ENCODE measurements at regions of chr20 and their contacts with region 1.

Region 1: GRCh38 chr20:31605031-31605901 is at the start of gene ID1:
- DNase-seq: peak; percentile 88

Region 2: GRCh38 chr20:31560094-31560899 is 45.0 kb before region 1 on chr20:
- CTCF ChIA-PET with region 1: interaction called, 119 read pairs
- POLR2A ChIA-PET with region 1: interaction called, 260 read pairs
- DNase-seq: peak; percentile 70

Region 3: DNA sequence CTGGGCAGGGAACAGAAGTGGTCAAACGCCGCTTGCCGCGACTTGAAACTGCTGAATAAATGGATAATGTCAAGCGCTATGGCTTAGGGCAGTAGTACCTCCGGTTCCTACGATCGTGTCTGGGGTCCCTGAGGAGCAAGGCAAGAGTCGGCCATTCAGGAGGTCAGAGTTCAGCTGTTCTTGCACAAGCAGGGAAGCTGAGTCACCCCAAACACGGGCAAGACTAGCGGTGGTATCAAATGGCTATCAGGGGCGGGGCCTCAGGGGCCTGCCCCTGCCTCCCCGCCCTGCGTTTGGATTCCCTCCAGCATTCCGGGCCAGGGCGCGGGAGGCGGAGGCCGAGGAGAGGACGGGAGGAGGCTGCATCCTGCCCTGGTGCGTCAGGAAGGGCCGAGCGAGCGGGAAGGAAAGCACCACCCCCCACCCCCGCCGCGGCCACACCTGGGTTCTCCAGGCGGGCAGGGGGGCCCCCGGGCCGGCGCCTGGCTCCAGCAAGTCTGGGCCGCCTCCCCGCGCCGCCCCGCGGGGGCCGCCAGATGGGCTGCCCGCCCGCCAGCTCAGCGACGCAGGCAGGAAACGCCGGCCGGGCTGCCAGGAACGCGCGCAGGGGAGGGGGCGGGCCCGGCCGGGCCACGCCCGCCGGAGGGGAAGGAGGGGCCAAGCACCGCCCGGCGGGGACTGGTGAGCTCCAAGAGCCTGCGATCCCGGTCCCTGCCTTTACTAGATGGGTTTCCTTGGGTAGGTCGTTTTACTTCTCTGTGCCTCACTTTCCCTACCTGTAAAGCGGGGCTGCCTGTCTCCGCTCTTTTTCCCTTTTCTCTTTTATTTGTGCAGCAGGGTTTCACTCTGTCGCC is 32.3 kb before region 1 on chr20:
- CTCF ChIA-PET with region 1: interaction called, 107 read pairs
- POLR2A ChIA-PET with region 1: interaction called, 260 read pairs
- DNase-seq: peak; percentile 91

Region 4: GRCh38 chr20:31587545-31588389 is 17.5 kb before region 1 on chr20:
- CTCF ChIA-PET with region 1: interaction called, 5 read pairs
- POLR2A ChIA-PET with region 1: interaction called, 15 read pairs
- DNase-seq: no peak

Measured in HEK293T (cell line).